ENCODE measurements at regions of chr14 and their contacts with region 1.

Region 1: GRCh38 chr14:68655911-68656360 is 136.9 kb downstream of the ZFP36L1 start:
- DNase-seq: no peak
- ATAC-seq: no peak
- H3K4me3 ChIP-seq: no peak overlapping the region
- H3K4me1 ChIP-seq: peaks cover 3% of the 10 kb centered on the region
- CTCF ChIP-seq: no peak

Region 2: DNA sequence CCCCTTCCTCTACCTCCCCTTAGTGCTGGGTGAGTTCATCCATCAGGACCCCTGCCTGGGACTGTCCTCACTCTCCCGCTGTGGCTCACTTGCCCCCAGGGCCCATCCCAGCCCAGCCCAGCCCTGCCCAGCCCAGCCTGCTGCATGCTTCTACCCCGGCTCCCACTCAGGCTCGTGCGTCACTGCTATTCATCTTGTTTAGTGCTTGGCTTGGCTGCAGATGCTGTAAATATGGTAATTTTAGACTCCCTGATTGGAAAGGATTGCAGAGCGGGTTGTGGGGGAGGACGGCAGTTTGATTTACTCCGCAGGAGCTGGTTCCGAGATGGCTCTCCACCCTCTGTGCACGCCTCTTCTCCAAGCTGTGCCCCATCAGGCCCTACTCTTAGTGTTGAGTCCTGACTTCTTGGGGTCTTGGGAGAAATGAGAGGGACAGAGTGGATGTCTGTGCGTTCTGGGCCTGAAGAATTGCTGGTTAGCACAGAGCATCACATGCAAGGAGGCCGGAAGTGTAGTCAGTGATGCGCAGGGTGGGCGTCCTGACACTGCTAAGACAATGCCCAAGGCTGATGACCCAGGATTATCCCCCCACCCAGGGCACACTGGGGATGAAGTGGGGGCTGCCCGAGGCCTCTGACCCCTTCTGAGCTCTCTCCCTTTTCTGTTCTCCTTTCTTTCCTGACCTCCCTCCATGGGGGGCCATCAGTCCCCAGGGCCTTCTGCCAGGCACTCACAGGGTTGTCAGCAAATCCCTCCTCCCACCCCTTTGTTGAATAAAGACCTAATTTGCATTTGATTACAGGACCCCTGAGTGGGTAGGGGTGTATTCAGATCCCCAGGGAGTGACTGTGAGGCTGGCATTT is 107.5 kb before region 1 on chr14:
- intact Hi-C with region 1: loop called in 1 of 2 experiments (anchors 10 kb)
- DNase-seq: peak; percentile 60 to 80 (median 68)
- ATAC-seq: peak; percentile 60
- H3K4me3 ChIP-seq: no peak overlapping the region
- H3K4me1 ChIP-seq: no peaks in the 10 kb centered on the region
- CTCF ChIP-seq: no peak

Region 3: DNA sequence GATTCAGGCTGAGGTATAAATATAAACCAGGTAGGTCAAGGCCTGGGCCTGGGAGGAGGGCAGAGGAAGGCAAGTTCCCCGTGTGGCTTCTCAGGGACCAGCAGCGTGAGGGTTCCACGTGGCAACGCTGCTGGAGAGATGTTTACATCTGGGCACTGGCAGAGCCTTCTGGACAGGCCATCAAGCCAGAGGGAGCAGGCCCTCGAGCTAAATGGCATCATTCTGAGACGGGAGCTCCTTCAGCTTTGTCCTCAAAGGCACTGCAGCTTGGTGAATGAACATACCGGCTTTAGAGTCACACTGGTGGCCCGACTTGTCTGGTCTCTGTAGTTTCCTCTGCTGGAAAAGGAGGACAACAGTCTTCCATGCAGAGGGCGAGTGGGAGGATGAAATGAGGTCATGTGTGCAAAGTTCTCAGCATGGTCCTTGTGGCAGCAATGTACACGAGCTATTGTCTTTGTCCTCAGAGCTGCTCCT is 94.4 kb before region 1 on chr14:
- intact Hi-C with region 1: no loop called
- DNase-seq: no peak
- ATAC-seq: no peak
- H3K4me3 ChIP-seq: no peak overlapping the region
- H3K4me1 ChIP-seq: peaks cover 10% of the 10 kb centered on the region
- CTCF ChIP-seq: no peak

Measured in mucosa of descending colon (tissue), 3 donors.